GM12878 (cell line): ENCODE measurements at regions of chr4 and their contacts with region 1.

Region 1: DNA sequence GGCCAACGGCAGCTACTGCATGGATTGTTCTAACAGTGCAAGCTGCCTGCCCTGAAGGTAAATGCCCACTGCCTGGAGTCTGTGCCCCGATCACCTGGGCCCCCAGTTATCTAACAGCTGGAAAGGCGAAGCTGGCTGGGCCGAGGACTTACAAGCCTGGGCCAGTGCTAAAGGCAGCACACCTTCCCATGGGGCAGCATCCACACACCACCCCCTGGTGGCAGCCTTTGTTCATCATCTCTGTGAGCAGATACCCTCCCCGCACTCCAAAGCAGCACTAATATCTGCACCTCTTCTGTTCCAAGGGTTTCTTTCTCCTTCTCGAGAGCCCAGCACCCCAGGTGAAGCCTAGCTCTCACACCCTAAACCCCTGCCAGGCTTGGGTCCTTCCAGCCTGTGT is 7.6 kb downstream of the SLC2A9 start:
- DNase-seq: no peak
- ATAC-seq: peak; percentile 86
- H3K4me3 ChIP-seq: no peak overlapping the region
- H3K27ac ChIP-seq: no peak overlapping the region
- H3K4me1 ChIP-seq: peaks cover 8% of the 10 kb centered on the region; the same call in 1 of the 2 replicates
- H3K27me3 ChIP-seq: no peaks in the 10 kb centered on the region
- CTCF ChIP-seq: peak; percentile 72 to 78 (median 76)
- EP300 ChIP-seq: no peak
- POLR2A ChIP-seq: no peak
- RAD21 ChIP-seq: peak; percentile 80

Region 2: DNA sequence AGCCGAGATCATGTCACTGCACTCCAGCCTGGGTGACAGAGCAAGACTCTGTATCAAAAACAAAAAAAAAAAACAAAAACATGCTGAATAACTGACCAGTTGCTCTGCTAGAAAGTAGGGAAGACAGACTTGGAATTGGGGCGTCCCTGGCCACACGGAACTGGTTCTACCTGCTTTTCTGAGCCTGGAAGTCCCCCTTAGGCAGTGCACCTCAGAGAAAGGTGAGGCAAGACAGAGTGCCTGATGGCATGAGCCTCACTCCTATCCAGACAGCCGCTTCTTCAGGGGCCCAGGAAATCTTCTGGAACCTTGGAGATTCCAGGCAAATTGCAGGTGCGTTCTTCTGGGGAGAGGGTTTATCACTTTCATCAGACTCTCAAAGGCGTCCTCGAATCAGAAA is 389.3 kb before region 1 on chr4:
- CTCF ChIA-PET with region 1: no interaction called
- POLR2A ChIA-PET with region 1: no interaction called
- RAD21 ChIA-PET with region 1: no interaction called
- SMC1A ChIA-PET with region 1: no interaction called
- in situ Hi-C with region 1: no loop called
- intact Hi-C with region 1: no loop called
- DNase-seq: no peak
- ATAC-seq: no peak
- H3K4me3 ChIP-seq: no peak overlapping the region
- H3K27ac ChIP-seq: no peak overlapping the region
- H3K4me1 ChIP-seq: no peaks in the 10 kb centered on the region
- H3K27me3 ChIP-seq: no peaks in the 10 kb centered on the region
- CTCF ChIP-seq: no peak
- EP300 ChIP-seq: no peak
- POLR2A ChIP-seq: no peak
- RAD21 ChIP-seq: no peak

Region 3: GRCh38 chr4:9704551-9705332 is 309.0 kb before region 1 on chr4:
- CTCF ChIA-PET with region 1: interaction called, 114 read pairs
- POLR2A ChIA-PET with region 1: no interaction called
- RAD21 ChIA-PET with region 1: interaction called, 33 read pairs
- SMC1A ChIA-PET with region 1: interaction called, 27 read pairs
- in situ Hi-C with region 1: loop called (anchors 10 kb)
- intact Hi-C with region 1: loop called (anchors 1 kb)
- DNase-seq: no peak
- ATAC-seq: no peak
- H3K4me3 ChIP-seq: no peak overlapping the region
- H3K27ac ChIP-seq: no peak overlapping the region
- H3K4me1 ChIP-seq: no peaks in the 10 kb centered on the region
- H3K27me3 ChIP-seq: no peaks in the 10 kb centered on the region
- CTCF ChIP-seq: 0 out of 6 replicates have a peak, but pooled peaks of 1 of the 3 experiments have one; percentile 5
- EP300 ChIP-seq: no peak
- POLR2A ChIP-seq: no peak
- RAD21 ChIP-seq: no peak

Region 4: GRCh38 chr4:9800848-9801247 is 212.9 kb before region 1 on chr4:
- CTCF ChIA-PET with region 1: interaction called, 19 read pairs
- POLR2A ChIA-PET with region 1: no interaction called
- RAD21 ChIA-PET with region 1: interaction called, 6 read pairs
- SMC1A ChIA-PET with region 1: interaction called, 7 read pairs
- in situ Hi-C with region 1: no loop called
- intact Hi-C with region 1: no loop called
- DNase-seq: no peak
- ATAC-seq: peak; percentile 22; the same call in 2 of the 3 replicates
- H3K4me3 ChIP-seq: no peak overlapping the region
- H3K27ac ChIP-seq: no peak overlapping the region
- H3K4me1 ChIP-seq: no peaks in the 10 kb centered on the region
- H3K27me3 ChIP-seq: no peaks in the 10 kb centered on the region
- CTCF ChIP-seq: no peak
- EP300 ChIP-seq: no peak
- POLR2A ChIP-seq: no peak
- RAD21 ChIP-seq: no peak

Region 5: DNA sequence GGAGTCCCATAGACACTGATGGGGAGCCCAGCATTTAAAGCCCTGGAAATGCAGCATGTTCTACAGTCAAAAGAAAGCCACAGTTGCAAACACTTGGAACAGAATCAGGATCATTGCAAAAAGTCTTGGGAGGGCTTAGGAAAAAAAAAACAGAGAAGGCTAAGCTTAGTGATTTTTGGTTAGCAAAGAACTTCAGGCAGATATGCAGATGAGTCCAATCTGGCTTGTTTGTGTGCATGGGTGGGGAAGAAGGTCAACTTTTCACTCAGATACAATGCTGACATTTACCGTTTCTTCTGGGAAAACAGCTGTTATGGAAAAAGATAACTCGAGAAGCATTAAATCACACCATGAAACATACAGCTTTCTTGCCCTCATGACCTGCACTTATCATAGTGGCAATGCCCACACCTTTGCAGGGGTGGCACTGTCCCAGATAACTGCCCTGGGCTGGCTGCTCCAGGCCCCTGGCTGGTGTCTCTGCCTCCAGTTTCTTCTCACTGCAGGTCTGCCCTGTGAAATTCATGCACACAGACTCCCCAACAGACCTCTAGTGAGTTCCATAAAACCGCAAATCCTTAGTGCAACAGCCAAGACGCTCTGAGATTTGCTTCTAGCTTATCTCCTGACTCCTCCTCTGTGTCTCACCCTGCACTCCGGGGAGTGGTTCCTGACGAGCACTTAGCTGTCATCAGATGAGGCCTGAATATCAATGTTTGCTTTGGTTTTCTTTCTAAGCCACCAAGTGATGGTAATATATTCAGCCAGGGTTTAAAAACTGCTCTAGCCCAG is 133.1 kb before region 1 on chr4:
- CTCF ChIA-PET with region 1: interaction called, 10 read pairs
- POLR2A ChIA-PET with region 1: no interaction called
- RAD21 ChIA-PET with region 1: interaction called, 8 read pairs
- SMC1A ChIA-PET with region 1: interaction called, 7 read pairs
- in situ Hi-C with region 1: no loop called
- intact Hi-C with region 1: no loop called
- DNase-seq: no peak
- ATAC-seq: no peak
- H3K4me3 ChIP-seq: no peak overlapping the region
- H3K27ac ChIP-seq: no peak overlapping the region
- H3K4me1 ChIP-seq: no peaks in the 10 kb centered on the region
- H3K27me3 ChIP-seq: no peaks in the 10 kb centered on the region
- CTCF ChIP-seq: no peak
- EP300 ChIP-seq: no peak
- POLR2A ChIP-seq: no peak
- RAD21 ChIP-seq: no peak

Region 6: DNA sequence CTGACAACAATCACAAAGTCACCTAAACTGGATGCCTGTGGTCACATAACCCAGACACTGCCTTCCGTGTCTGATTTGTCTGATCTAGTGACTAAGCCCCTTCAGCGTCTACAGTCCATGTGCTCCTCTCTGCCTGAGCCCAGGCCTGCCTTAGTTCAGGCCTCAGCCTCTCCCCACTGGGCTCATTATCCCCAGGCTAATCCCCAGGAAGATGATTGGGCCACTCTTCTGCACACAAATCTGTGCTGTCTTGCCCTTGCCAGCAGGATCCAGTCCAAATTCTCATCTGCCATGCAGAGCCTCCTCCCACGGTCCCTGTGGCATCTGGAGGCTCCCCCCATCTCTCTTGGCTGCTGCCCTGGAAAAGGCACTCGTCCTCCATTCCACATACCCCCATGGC is 89.0 kb before region 1 on chr4:
- CTCF ChIA-PET with region 1: interaction called, 55 read pairs
- POLR2A ChIA-PET with region 1: no interaction called
- RAD21 ChIA-PET with region 1: interaction called, 22 read pairs
- SMC1A ChIA-PET with region 1: interaction called, 18 read pairs
- in situ Hi-C with region 1: no loop called
- intact Hi-C with region 1: loop called (anchors 5 kb)
- DNase-seq: no peak
- ATAC-seq: no peak
- H3K4me3 ChIP-seq: no peak overlapping the region
- H3K27ac ChIP-seq: no peak overlapping the region
- H3K4me1 ChIP-seq: no peaks in the 10 kb centered on the region
- H3K27me3 ChIP-seq: no peaks in the 10 kb centered on the region
- CTCF ChIP-seq: no peak
- EP300 ChIP-seq: no peak
- POLR2A ChIP-seq: no peak
- RAD21 ChIP-seq: no peak

Region 7: DNA sequence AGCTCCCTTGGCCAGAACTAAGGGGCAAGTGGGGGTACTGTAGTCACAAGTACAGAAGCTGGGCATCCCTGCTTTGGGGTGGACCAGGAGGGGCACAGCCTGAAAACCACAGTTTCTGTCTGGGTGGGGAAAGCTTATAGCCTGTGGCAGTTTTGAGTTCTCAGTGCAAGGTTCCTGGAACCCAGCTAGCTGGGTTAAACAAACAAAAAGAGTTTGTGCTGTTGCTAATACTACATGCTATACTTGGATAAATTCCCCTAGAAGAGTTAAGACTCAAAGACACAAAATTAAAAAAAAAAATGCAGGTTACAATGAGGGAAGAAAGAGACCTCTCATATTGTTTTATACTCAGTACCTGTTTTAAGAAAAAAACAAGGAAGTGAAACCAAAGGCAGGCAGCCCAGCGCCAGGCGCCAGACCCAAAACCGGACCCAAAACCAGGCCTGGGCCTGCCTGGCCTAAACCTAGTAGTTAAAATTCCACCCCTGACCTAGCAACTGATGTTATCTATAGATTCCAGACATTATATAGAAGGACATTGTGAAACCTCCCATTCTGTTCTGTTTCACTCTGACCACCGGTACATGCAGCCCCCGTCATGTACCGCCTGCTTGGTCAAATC is 43.2 kb before region 1 on chr4:
- CTCF ChIA-PET with region 1: interaction called, 30 read pairs
- POLR2A ChIA-PET with region 1: interaction called, 39 read pairs
- RAD21 ChIA-PET with region 1: interaction called, 69 read pairs
- SMC1A ChIA-PET with region 1: interaction called, 70 read pairs
- in situ Hi-C with region 1: no loop called
- intact Hi-C with region 1: no loop called
- DNase-seq: peak; percentile 41
- ATAC-seq: peak; percentile 90
- H3K4me3 ChIP-seq: no peak overlapping the region; the same call in 1 of the 2 replicates
- H3K27ac ChIP-seq: peak overlapping the region; percentile 87
- H3K4me1 ChIP-seq: peaks cover 20% of the 10 kb centered on the region
- H3K27me3 ChIP-seq: no peaks in the 10 kb centered on the region
- CTCF ChIP-seq: no peak
- EP300 ChIP-seq: 0 out of 4 replicates have a peak, but pooled peaks of 1 of the 2 experiments have one; percentile 16
- POLR2A ChIP-seq: no peak
- RAD21 ChIP-seq: no peak

Region 8: GRCh38 chr4:9999956-10000551 is 13.7 kb before region 1 on chr4:
- CTCF ChIA-PET with region 1: interaction called, 87 read pairs
- POLR2A ChIA-PET with region 1: interaction called, 4 read pairs
- RAD21 ChIA-PET with region 1: interaction called, 40 read pairs
- SMC1A ChIA-PET with region 1: interaction called, 77 read pairs
- in situ Hi-C with region 1: no loop called
- intact Hi-C with region 1: no loop called
- DNase-seq: no peak
- ATAC-seq: peak; percentile 57
- H3K4me3 ChIP-seq: no peak overlapping the region
- H3K27ac ChIP-seq: peak overlapping the region; percentile 60
- H3K4me1 ChIP-seq: peaks cover 44% of the 10 kb centered on the region
- H3K27me3 ChIP-seq: no peaks in the 10 kb centered on the region
- CTCF ChIP-seq: no peak
- EP300 ChIP-seq: no peak
- POLR2A ChIP-seq: no peak
- RAD21 ChIP-seq: no peak

Region 9: GRCh38 chr4:10054571-10055041 is 40.9 kb after region 1 on chr4:
- CTCF ChIA-PET with region 1: no interaction called
- POLR2A ChIA-PET with region 1: no interaction called
- RAD21 ChIA-PET with region 1: no interaction called
- SMC1A ChIA-PET with region 1: no interaction called
- in situ Hi-C with region 1: no loop called
- intact Hi-C with region 1: no loop called
- DNase-seq: no peak
- ATAC-seq: no peak
- H3K4me3 ChIP-seq: no peak overlapping the region
- H3K27ac ChIP-seq: no peak overlapping the region
- H3K4me1 ChIP-seq: no peaks in the 10 kb centered on the region
- H3K27me3 ChIP-seq: no peaks in the 10 kb centered on the region
- CTCF ChIP-seq: no peak
- EP300 ChIP-seq: no peak
- POLR2A ChIP-seq: no peak
- RAD21 ChIP-seq: no peak